Left ventricle myocardium inferior (tissue), 1 donor: ENCODE measurements at regions of chr7 and their contacts with region 1.

Region 1: GRCh38 chr7:37234928-37235327 is 213.7 kb downstream of the ELMO1 start:
- DNase-seq: no peak
- H3K4me3 ChIP-seq: no peak overlapping the region
- H3K27ac ChIP-seq: no peak overlapping the region
- H3K4me1 ChIP-seq: peaks cover 12% of the 10 kb centered on the region
- H3K27me3 ChIP-seq: no peaks in the 10 kb centered on the region
- CTCF ChIP-seq: peak; percentile 69

Region 2: DNA sequence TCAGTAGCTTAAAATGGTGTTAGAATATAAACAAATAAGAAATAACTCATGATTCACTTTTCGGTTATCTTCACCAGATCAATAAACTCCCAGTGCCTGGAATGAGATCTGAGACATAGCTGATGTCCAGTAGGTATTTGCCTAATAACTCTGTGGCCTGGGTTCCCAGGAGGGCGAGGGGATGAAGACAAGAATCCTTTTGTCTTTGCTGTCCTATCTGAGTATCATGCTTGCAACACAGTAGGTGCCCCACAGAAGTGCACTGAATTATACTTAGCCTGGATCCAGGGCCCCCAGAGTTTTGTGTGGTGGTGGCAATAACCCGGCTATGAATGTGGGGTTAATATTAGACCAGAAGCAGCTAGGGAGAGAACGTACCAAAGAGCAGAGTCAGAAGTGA is 160.6 kb before region 1 on chr7:
- intact Hi-C with region 1: no loop called
- DNase-seq: no peak
- H3K4me3 ChIP-seq: no peak overlapping the region
- H3K27ac ChIP-seq: no peak overlapping the region
- H3K4me1 ChIP-seq: no peaks in the 10 kb centered on the region
- H3K27me3 ChIP-seq: no peaks in the 10 kb centered on the region
- CTCF ChIP-seq: no peak

Region 3: DNA sequence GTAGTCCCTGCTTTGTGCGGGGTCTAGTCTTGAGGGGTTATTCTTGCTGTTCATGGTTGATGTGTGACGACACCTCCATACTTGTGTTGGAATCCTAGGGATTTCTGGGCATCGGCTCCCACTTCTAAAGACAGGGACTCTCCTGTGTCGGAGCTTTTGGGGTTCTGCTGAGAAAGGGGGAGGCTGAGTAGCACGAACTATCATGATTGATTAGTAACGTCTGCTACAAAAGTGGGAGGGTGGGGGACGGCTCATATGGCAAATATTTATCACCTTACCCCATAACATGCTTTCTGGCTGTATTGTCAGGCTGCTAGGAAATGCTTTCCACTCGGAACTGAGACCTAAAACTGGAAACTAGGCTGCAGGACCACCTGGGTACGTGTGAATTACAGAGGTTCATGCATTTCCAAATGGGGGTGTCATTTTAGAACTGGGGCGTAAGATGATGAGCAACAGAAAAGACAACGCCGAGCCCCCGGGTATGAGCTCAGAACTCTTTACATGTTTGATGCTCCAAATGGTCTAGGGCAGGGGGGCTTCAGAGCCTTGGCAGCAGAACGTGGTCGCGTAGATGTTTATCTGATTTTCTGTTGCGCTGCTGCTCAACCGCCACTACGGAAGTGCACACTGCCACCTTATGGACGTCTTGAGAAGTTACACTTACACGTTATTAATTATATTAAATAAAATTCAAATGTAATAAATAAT is 598.3 kb after region 1 on chr7:
- intact Hi-C with region 1: loop called (anchors 10 kb)
- DNase-seq: no peak
- H3K4me3 ChIP-seq: peak overlapping the region; percentile 57
- H3K27ac ChIP-seq: no peak overlapping the region
- H3K4me1 ChIP-seq: peaks cover 13% of the 10 kb centered on the region
- H3K27me3 ChIP-seq: no peaks in the 10 kb centered on the region
- CTCF ChIP-seq: peak; percentile 81